ENCODE measurements at regions of chr1 and their contacts with region 1.

Region 1: DNA sequence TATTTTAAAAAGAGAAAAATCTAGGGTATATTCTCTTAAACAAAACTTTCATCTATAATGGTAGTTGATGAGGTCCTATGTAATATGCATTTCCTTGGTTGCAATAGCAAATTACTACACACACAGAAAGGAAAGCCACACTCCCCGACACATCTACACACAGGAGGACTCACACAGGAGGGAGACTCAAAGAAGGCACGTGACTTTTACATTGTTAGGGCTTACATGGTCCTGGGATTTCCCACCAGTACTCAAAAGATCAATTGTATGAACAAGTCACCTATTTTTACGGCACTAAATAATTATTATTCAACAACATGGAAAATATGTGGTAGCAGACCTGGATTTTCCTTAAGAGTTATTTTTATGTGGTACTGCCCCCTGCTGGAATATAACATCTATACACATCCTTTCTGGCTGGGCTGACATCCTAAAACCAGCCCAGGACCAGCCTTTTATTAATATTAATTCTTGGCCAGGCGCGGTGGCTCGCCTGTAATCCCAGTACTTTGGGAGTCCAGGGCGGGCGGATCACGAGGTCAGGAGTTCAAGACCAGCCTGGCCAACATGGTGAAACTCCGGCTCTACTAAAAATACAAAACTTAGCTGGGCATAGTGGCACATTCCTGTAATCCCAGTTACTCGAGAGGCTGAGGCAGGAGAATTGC is 33.9 kb upstream of the LGALS8 start:
- DNase-seq: no peak
- H3K4me3 Mint-ChIP-seq: no peak overlapping the region
- H3K27ac Mint-ChIP-seq: no peak overlapping the region
- H3K4me1 Mint-ChIP-seq: peaks cover 17% of the 10 kb centered on the region
- H3K27me3 Mint-ChIP-seq: peaks cover 7% of the 10 kb centered on the region

Region 2: GRCh38 chr1:236108027-236108648 is 381.7 kb before region 1 on chr1:
- CTCF ChIA-PET with region 1: interaction called, 10 read pairs
- POLR2A ChIA-PET with region 1: no interaction called
- DNase-seq: no peak
- H3K4me3 Mint-ChIP-seq: no peak overlapping the region
- H3K27ac Mint-ChIP-seq: no peak overlapping the region
- H3K4me1 Mint-ChIP-seq: peaks cover 11% of the 10 kb centered on the region
- H3K27me3 Mint-ChIP-seq: no peaks in the 10 kb centered on the region

Region 3: DNA sequence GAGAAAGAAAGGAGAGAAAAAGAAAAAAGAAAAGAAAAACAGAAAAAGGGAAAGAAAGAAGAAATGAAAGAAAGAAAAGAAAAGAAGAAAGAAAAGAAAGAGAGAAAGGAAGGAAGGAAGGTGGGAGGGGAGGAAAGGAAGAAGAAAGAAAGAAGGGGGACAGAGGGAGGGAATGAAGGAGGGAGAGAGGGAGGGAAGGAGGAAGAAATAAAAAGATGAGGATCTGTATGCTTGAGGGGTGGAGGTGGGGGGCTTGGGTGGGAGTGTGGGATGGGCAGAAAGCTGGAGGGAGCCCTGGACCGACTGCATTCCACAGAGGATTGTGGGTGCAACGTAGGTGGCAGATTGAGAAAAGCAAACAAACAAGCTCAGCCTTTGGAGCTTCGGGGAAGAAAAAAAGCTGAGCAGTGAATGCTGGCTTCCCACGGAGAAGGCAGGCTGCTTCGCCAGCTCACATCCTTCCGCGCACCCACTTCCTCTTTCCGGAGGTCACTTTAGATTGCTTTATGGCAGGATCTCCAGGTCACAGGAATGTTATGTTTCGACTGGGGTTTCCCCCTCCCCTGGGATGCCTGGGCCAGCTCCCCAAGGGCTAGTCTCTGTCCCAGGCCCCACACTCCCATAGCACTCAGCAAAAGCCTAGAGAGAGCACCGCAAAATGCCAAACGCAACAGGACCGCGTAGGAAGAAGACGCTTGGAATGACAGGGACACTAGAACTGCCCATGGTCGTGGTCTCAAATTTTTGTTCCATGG is 13.2 kb after region 1 on chr1:
- CTCF ChIA-PET with region 1: interaction called, 24 read pairs
- POLR2A ChIA-PET with region 1: interaction called, 3 read pairs
- DNase-seq: no peak
- H3K4me3 Mint-ChIP-seq: no peak overlapping the region
- H3K27ac Mint-ChIP-seq: no peak overlapping the region
- H3K4me1 Mint-ChIP-seq: peaks cover 22% of the 10 kb centered on the region
- H3K27me3 Mint-ChIP-seq: peaks cover 2% of the 10 kb centered on the region

Region 4: GRCh38 chr1:236893626-236894545 is 404.0 kb after region 1 on chr1:
- CTCF ChIA-PET with region 1: no interaction called
- POLR2A ChIA-PET with region 1: no interaction called
- DNase-seq: no peak
- H3K4me3 Mint-ChIP-seq: no peak overlapping the region
- H3K27ac Mint-ChIP-seq: no peak overlapping the region
- H3K4me1 Mint-ChIP-seq: no peaks in the 10 kb centered on the region
- H3K27me3 Mint-ChIP-seq: no peaks in the 10 kb centered on the region